CD8-positive, alpha-beta T cell (primary cell): ENCODE measurements at regions of chr13 and their contacts with region 1.

Region 1: DNA sequence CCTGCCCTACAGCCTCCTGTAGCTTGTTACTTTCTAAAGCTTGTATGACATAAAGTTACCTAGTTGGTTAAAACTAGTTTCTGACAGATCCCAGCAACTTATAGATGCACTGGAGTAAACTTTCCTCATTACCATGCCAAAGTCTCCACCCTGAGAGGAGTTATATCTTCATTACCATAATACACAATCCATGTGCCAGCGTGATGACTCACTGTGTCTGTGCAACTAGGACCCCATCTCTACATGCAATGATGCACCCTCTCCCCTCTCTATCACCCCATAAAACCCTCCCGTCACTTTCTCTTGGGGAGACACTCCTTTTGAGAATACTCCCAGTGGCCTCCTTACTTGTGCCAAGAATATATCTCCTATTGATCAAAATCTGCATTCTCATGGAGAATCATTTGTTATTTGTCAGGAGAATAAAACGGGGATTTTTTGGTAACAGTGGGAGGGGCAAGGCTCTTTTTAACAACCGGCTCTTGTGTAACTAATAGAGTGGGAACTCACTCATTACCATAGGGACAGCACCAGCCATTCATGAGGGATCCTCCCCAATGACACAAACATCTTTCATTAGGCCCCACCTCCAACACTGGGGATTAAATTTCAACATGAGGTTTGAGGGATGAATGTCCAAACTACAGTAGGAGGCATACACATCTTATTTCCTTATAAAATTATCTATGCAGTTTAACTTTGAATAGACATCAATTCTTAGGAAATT is 235.1 kb upstream of the ATXN8OS start:
- DNase-seq: no peak
- ATAC-seq: no peak
- H3K4me3 ChIP-seq: no peak overlapping the region
- H3K4me3 Mint-ChIP-seq: no peak overlapping the region
- H3K27ac ChIP-seq: no peak overlapping the region
- H3K27ac Mint-ChIP-seq: no peak overlapping the region
- H3K4me1 ChIP-seq: no peaks in the 10 kb centered on the region
- H3K4me1 Mint-ChIP-seq: no peaks in the 10 kb centered on the region
- H3K27me3 ChIP-seq: no peaks in the 10 kb centered on the region
- H3K27me3 Mint-ChIP-seq: no peaks in the 10 kb centered on the region
- CTCF ChIP-seq: no peak

Region 2: GRCh38 chr13:69315039-69315438 is 557.4 kb before region 1 on chr13:
- CTCF ChIA-PET with region 1: no interaction called
- POLR2A ChIA-PET with region 1: no interaction called
- intact Hi-C with region 1: no loop called
- DNase-seq: no peak
- ATAC-seq: no peak
- H3K4me3 ChIP-seq: no peak overlapping the region
- H3K4me3 Mint-ChIP-seq: no peak overlapping the region
- H3K27ac ChIP-seq: no peak overlapping the region
- H3K27ac Mint-ChIP-seq: no peak overlapping the region
- H3K4me1 ChIP-seq: no peaks in the 10 kb centered on the region
- H3K4me1 Mint-ChIP-seq: no peaks in the 10 kb centered on the region
- H3K27me3 ChIP-seq: no peaks in the 10 kb centered on the region
- H3K27me3 Mint-ChIP-seq: no peaks in the 10 kb centered on the region
- CTCF ChIP-seq: no peak

Region 3: GRCh38 chr13:69857183-69857821 is 15.2 kb before region 1 on chr13:
- CTCF ChIA-PET with region 1: no interaction called
- POLR2A ChIA-PET with region 1: no interaction called
- intact Hi-C with region 1: loop called in 1 of 2 experiments (anchors 1 kb)
- DNase-seq: peak in 1 of 9 experiments; percentile 4
- ATAC-seq: no peak
- H3K4me3 ChIP-seq: no peak overlapping the region
- H3K4me3 Mint-ChIP-seq: no peak overlapping the region
- H3K27ac ChIP-seq: no peak overlapping the region
- H3K27ac Mint-ChIP-seq: no peak overlapping the region
- H3K4me1 ChIP-seq: no peaks in the 10 kb centered on the region
- H3K4me1 Mint-ChIP-seq: no peaks in the 10 kb centered on the region
- H3K27me3 ChIP-seq: no peaks in the 10 kb centered on the region
- H3K27me3 Mint-ChIP-seq: no peaks in the 10 kb centered on the region
- CTCF ChIP-seq: peak; percentile 28

Region 4: GRCh38 chr13:70218618-70219017 is 346.1 kb after region 1 on chr13:
- CTCF ChIA-PET with region 1: no interaction called
- POLR2A ChIA-PET with region 1: no interaction called
- intact Hi-C with region 1: no loop called
- DNase-seq: no peak
- ATAC-seq: no peak
- H3K4me3 ChIP-seq: no peak overlapping the region
- H3K4me3 Mint-ChIP-seq: no peak overlapping the region
- H3K27ac ChIP-seq: no peak overlapping the region
- H3K27ac Mint-ChIP-seq: no peak overlapping the region
- H3K4me1 ChIP-seq: no peaks in the 10 kb centered on the region
- H3K4me1 Mint-ChIP-seq: no peaks in the 10 kb centered on the region
- H3K27me3 ChIP-seq: no peaks in the 10 kb centered on the region
- H3K27me3 Mint-ChIP-seq: no peaks in the 10 kb centered on the region
- CTCF ChIP-seq: no peak